SK-N-SH (cell line): ENCODE measurements at regions of chr10 and their contacts with region 1.

Region 1: DNA sequence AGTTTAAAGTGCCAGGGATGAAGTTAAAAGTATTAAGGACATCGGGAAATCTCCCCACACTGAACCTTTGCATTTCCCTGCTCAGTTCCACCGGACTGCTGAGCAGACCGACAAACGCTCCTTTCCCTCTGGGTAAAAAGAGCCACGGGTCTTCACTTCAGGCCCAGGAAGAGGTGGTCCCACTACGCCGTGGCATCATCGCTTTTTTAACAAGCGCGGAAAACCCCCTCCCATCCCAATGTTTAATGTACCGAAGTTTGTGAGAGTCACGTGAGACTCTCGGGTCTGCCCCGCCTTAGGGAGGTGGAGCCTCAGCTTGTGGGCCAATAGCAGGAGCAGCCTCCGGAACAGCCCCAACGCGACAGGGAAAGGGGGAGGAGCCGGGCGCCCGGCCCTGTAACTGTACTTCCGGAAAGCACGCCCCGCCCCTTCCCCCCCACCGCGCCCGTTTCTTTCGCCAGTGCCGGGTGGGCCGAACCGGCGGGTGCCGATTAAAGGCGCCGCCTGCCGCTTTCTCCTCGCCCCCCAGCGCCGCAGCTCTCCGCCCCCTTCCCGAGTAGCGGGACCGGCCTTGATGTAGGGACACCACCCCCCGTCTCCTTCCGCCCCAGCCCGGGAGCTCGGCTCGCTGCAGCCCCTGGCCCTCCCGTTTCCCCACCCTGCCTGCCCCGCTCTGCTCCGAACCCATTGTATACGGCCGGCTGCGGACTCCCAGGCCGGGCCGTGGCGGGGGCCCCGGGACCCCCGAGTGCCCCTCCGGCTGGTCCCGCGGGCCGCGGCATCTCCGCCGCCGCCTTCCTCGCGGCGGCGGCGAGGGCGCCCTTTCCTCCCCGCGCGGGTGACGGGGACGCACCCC is 2.2 kb upstream of the TRIM8 start:
- DNase-seq: peak; percentile 92
- H3K4me3 ChIP-seq: peak overlapping the region; percentile 56 to 99
- H3K27ac ChIP-seq: peak overlapping the region; percentile 93 to 94
- H3K4me1 ChIP-seq: peaks cover 4 to 13% of the 10 kb centered on the region in 2 experiments; a peak in 3 of 4 replicates
- H3K27me3 ChIP-seq: no peaks in the 10 kb centered on the region
- CTCF ChIP-seq: no peak
- EP300 ChIP-seq: 0 out of 4 replicates have a peak, but pooled peaks of 1 of the 2 experiments have one; percentile 21
- RAD21 ChIP-seq: no peak

Region 2: GRCh38 chr10:102503281-102504220 is 138.6 kb before region 1 on chr10 and contains the start of gene SUFU:
- CTCF ChIA-PET with region 1: interaction called, 13 read pairs
- POLR2A ChIA-PET with region 1: interaction called, 4 read pairs
- DNase-seq: peak; percentile 98
- H3K4me3 ChIP-seq: peak within 1 kb of the TSS; percentile 85 to 98
- H3K27ac ChIP-seq: peak within 1 kb of the TSS; percentile 45 to 78; a peak in 3 of 4 replicates
- H3K4me1 ChIP-seq: peaks cover 8 to 15% of the 10 kb centered on the region in 2 experiments; a peak in 2 of 4 replicates
- H3K27me3 ChIP-seq: no peaks in the 10 kb centered on the region
- CTCF ChIP-seq: peak; percentile 88
- EP300 ChIP-seq: no peak; a peak in 1 of 4 replicates
- RAD21 ChIP-seq: peak; percentile 86
- polyA plus RNA-seq, gene SUFU: 4.6 and 5.7 TPM in 2 replicates

Region 3: DNA sequence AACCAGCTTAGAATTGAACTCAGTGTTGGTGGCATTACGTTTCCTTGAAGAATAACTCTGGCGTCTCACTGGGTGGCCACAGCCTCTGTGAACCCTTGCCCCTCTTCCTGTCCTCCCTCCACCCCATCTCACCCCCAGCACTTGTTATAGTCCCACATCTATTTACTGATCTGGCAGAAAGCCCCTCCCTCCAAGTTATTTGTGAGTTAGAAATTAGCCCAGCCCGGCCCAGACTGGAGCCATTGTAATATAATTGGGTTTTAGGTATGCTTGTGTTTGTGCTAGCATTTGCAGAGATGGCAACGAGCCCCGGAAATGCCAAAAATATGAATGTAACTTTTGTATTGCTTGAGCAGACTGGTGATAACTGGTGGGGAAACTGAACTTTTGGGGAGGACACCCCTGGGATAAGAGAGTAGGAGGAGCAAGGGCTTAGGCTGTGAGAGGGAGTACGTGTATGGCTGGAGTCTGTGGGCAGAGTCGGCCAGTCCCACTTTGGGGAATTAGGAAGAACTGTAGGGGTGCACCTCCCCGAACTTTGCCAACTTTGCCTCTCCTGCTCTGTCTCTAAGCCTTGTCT is 17.3 kb before region 1 on chr10:
- CTCF ChIA-PET with region 1: interaction called, 18 read pairs
- POLR2A ChIA-PET with region 1: interaction called, 34 read pairs
- DNase-seq: no peak
- H3K4me3 ChIP-seq: no peak overlapping the region
- H3K27ac ChIP-seq: peak overlapping the region in 1 of 2 experiments; percentile 99; a peak in 2 of 4 replicates
- H3K4me1 ChIP-seq: peaks cover 29 to 89% of the 10 kb centered on the region in 2 experiments
- H3K27me3 ChIP-seq: no peaks in the 10 kb centered on the region
- CTCF ChIP-seq: no peak
- EP300 ChIP-seq: no peak
- RAD21 ChIP-seq: no peak

Region 4: DNA sequence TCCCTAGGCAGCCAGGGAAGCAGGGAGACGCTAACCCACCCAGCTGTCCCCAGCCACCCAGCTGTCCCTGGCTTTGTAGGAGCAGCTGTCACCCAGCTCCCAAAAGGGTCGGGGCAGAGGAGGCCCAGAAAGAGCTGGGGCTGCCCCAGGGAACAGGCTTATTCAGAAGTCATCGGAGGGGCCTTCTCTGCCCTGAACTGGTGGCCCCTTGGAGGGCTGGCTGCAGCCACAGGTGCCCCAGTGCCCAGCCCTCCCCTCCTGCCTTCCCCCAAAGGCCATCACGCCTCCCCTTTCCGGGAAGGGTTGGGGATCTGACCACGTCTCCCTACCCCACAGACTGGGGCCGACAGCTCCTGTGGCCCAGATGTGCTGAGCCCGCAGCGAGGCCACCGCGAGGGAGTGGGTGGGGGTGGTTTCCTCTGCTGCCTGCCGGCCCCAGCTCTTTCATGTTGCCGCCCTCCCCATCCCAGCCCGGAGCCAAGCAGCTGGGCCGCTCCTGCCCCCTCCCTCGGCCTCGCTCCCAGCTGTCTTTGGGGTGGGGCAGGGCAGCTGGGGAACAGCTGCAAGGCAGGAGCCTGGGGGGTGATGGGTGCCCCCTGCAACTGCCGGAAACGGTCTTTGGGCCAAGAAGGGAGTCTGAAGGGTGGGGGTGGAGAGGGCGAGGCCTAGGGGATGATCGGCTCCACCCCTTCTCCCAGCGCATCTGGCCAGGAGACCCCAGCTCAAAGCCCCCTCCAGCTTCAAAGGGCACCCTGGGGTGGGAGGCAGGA is 19.0 kb after region 1 on chr10:
- CTCF ChIA-PET with region 1: interaction called, 18 read pairs
- POLR2A ChIA-PET with region 1: interaction called, 12 read pairs
- DNase-seq: peak; percentile 91
- H3K4me3 ChIP-seq: no peak overlapping the region; a peak in 1 of 4 replicates
- H3K27ac ChIP-seq: peak overlapping the region in 1 of 2 experiments; percentile 31; a peak in 1 of 4 replicates
- H3K4me1 ChIP-seq: peaks cover 0 to 15% of the 10 kb centered on the region in 2 experiments; a peak in 1 of 4 replicates
- H3K27me3 ChIP-seq: no peaks in the 10 kb centered on the region
- CTCF ChIP-seq: no peak
- EP300 ChIP-seq: no peak
- RAD21 ChIP-seq: no peak

Region 5: GRCh38 chr10:102678842-102679289 is 36.8 kb after region 1 on chr10:
- CTCF ChIA-PET with region 1: interaction called, 56 read pairs
- POLR2A ChIA-PET with region 1: interaction called, 5 read pairs
- DNase-seq: peak; percentile 81
- H3K4me3 ChIP-seq: peak overlapping the region in 1 of 2 experiments; percentile 32; a peak in 1 of 4 replicates
- H3K27ac ChIP-seq: no peak overlapping the region; a peak in 1 of 4 replicates
- H3K4me1 ChIP-seq: peaks cover 23 to 52% of the 10 kb centered on the region in 2 experiments
- H3K27me3 ChIP-seq: no peaks in the 10 kb centered on the region
- CTCF ChIP-seq: peak; percentile 68
- EP300 ChIP-seq: no peak
- RAD21 ChIP-seq: peak; percentile 64

Region 6: DNA sequence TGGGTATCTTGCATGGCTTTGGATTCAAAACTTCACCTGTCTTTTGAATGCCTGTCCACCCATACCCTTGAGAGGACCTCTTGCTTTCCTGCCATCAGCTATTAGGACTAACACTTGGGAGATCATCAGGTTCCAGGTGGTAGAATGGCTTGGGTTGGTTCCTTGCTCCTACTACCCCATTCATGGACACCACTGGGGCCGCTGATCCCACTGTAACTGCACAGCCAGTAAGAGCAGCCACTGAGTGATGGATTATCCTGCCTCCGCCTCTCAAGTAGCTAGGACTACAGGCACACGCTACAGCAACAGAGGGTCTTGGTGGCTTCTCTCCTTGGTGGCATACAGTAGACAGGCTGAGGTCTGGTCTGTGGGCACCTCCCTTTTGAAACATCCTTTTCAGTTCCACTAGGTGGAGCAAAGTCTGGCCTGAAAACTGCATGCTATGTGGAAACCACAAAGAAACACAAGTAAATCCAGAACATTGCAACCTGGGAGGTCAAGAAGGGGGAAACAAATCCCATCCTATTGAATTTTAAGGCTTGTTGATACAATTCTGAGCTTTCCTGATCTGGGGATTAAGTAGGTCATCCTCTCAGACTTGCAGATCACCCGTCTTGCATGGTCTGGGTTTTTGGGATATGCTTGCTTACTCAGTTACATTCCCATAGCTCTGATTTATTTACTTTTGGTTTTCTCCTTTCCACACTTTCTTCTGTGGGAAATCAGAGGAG is 111.0 kb after region 1 on chr10:
- CTCF ChIA-PET with region 1: no interaction called
- POLR2A ChIA-PET with region 1: no interaction called
- DNase-seq: peak; percentile 49
- H3K4me3 ChIP-seq: no peak overlapping the region
- H3K27ac ChIP-seq: peak overlapping the region in 1 of 2 experiments; percentile 34; a peak in 1 of 4 replicates
- H3K4me1 ChIP-seq: peaks cover 2 to 7% of the 10 kb centered on the region in 2 experiments; a peak in 1 of 4 replicates
- H3K27me3 ChIP-seq: no peaks in the 10 kb centered on the region
- CTCF ChIP-seq: peak; percentile 71
- EP300 ChIP-seq: no peak
- RAD21 ChIP-seq: peak; percentile 68

Region 7: GRCh38 chr10:102859911-102860310 is 217.8 kb after region 1 on chr10:
- CTCF ChIA-PET with region 1: no interaction called
- POLR2A ChIA-PET with region 1: no interaction called
- DNase-seq: no peak
- H3K4me3 ChIP-seq: no peak overlapping the region
- H3K27ac ChIP-seq: no peak overlapping the region
- H3K4me1 ChIP-seq: peaks cover 0 to 18% of the 10 kb centered on the region in 2 experiments; a peak in 1 of 4 replicates
- H3K27me3 ChIP-seq: no peaks in the 10 kb centered on the region
- CTCF ChIP-seq: no peak
- EP300 ChIP-seq: no peak
- RAD21 ChIP-seq: no peak